ENCODE measurements at regions of chr13 and their contacts with region 1.

Region 1: DNA sequence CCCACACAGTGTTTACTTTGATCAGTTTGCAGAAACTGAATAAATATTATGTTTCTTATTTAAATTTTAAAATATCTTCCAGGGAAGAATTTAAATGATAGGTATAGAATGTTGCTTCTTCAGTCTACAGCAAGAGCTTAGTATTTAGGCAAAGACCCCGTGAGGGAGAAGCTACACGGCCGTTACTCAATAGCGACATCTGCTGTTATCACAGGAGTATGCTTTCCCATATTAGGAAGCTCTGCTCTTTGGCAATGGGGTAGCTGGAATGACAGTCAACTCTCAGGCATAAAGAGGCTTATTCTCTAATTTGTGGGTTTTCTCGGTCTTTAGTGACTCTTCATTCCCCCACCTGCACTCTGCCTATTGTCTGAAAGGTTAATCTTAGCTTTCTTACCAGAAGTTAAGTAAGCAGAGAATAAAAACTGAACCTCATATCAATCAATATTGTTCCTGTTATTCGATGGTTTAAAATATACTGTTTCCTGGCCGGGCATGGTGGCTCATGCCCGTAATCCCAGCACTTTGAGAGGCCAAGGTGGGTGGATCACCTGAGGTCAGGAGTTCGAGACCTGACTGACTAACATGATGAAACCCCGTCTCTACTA is 13.2 kb upstream of the LHFPL6 start:
- DNase-seq: peak; percentile 71 to 87 (median 80)
- H3K4me3 ChIP-seq: no peak overlapping the region
- H3K27ac ChIP-seq: no peak overlapping the region
- H3K4me1 ChIP-seq: peaks cover 0 to 2% (median 0%) of the 10 kb centered on the region in 4 experiments
- H3K27me3 ChIP-seq: no peaks in the 10 kb centered on the region

Region 2: GRCh38 chr13:39047560-39047959 is 568.6 kb before region 1 on chr13:
- CTCF ChIA-PET with region 1: interaction called, 15 read pairs
- POLR2A ChIA-PET with region 1: no interaction called
- DNase-seq: peak in 1 of 3 donors; percentile 3
- H3K4me3 ChIP-seq: no peak overlapping the region
- H3K27ac ChIP-seq: no peak overlapping the region
- H3K4me1 ChIP-seq: no peaks in the 10 kb centered on the region
- H3K27me3 ChIP-seq: no peaks in the 10 kb centered on the region

Region 3: GRCh38 chr13:39415008-39415802 is 201.0 kb before region 1 on chr13:
- CTCF ChIA-PET with region 1: interaction called, 100 read pairs
- POLR2A ChIA-PET with region 1: no interaction called
- DNase-seq: peak; percentile 61 to 78 (median 77)
- H3K4me3 ChIP-seq: no peak overlapping the region
- H3K27ac ChIP-seq: no peak overlapping the region
- H3K4me1 ChIP-seq: peaks cover 0 to 10% (median 1%) of the 10 kb centered on the region in 4 experiments
- H3K27me3 ChIP-seq: no peaks in the 10 kb centered on the region

Region 4: DNA sequence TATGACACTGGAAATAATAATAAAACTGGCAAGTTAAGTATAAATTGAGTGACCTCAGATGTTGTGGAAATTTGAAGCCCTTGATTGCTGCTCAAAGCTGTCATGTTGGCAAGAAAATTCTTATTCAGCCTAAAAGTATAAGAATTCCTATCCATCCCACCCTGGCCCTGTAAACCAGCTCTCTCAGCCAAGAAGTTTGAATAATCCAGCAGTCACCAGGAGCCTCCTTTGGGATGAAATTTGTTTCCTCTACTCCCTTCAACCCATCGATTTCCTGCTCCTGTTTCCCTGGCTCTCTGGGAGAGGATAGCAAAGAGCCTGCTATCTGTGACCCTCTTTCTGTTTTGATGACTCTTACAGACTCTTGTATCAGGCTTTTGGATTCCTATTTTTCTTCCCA is 182.5 kb before region 1 on chr13:
- CTCF ChIA-PET with region 1: no interaction called
- POLR2A ChIA-PET with region 1: no interaction called
- DNase-seq: no peak
- H3K4me3 ChIP-seq: no peak overlapping the region
- H3K27ac ChIP-seq: no peak overlapping the region
- H3K4me1 ChIP-seq: no peaks in the 10 kb centered on the region
- H3K27me3 ChIP-seq: no peaks in the 10 kb centered on the region

Region 5: DNA sequence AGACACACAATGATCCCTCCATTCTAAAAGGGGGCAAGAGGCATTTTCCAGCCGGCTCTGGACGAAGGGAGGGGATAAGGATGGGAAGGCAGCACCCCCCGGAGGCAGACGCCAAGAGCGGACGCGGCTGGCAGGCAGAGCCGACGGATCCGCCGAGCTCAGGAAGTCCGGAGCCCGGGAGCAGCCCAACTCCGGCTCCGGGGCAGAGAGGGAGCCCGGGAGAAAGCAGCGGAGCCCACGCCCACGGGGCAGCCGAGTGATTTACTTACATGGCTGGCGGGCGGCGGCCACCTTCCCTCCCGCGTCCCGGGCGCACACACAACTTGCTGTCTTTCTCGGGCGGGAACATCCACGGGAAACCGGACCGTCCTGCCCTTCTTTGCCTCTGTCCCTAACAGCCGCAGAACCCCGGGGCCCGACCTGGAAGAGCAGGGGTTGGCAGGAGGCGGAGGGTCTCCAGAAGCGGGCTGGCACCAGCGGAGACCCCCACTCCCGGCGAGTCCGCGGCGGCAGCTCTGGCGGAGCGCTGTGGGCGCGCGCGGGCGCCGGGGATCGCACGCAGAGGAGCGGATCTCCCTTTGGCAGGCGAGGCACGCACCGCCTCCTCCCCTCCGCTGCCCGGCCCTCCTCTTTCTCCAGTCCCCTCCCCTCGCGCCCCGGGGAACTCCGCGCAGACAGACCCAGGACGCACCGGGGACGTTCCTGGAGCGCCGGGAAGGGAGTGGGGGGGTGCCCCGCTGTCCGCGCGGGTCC is 13.4 kb before region 1 on chr13 and contains the start of gene LHFPL6:
- CTCF ChIA-PET with region 1: interaction called, 26 read pairs
- POLR2A ChIA-PET with region 1: no interaction called
- DNase-seq: peak; percentile 54 to 81 (median 78)
- H3K4me3 ChIP-seq: peak within 1 kb of the TSS; percentile 72 to 91 (median 85)
- H3K27ac ChIP-seq: no peak within 1 kb of the TSS
- H3K4me1 ChIP-seq: peaks cover 0 to 17% (median 10%) of the 10 kb centered on the region in 4 experiments
- H3K27me3 ChIP-seq: peaks cover 0 to 7% (median 4%) of the 10 kb centered on the region in 5 experiments